ENCODE measurements at regions of chr18 and their contacts with region 1.

Region 1: GRCh38 chr18:74652392-74652988 is 54.8 kb downstream of the ZNF407 start:
- DNase-seq: no peak
- ATAC-seq: no peak

Region 2: DNA sequence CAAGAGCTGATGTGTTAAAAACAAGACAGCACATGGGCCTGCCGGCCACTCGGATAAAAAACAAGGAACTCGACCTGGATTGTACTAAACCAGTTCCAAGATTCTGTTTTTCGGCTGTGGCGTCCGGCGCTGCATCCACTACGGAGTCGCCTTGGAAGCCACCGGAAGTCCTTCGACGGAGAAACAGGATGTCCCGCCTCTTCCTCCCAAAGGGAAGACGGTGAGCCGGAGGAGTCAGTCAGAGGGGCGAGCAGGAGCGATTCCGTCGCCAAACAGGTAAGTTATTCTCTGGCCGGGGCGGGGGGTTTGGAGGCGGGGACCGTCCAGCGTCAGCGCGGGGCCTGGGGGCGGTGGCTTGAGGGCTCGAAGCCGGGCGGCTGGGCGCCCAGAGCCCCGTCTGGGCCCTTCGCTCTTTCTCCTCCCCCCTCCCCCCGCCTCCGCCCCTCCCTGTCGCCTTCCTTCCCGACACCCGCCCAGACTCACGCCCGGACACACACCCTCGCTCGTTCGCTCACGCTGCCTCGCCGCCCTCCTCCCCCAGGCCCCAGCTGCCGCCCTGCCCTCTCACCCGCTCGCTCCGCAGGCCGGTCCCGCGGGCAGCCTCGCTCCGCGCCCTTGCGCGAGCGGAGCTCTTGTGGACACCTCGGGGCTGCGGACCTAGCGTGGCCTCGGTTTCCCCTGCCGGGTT is 54.7 kb before region 1 on chr18 and contains the start of gene ZNF407:
- intact Hi-C with region 1: no loop called
- DNase-seq: peak; percentile 93
- ATAC-seq: peak; percentile 96
- total RNA-seq, gene ZNF407: 22.9 TPM

Region 3: DNA sequence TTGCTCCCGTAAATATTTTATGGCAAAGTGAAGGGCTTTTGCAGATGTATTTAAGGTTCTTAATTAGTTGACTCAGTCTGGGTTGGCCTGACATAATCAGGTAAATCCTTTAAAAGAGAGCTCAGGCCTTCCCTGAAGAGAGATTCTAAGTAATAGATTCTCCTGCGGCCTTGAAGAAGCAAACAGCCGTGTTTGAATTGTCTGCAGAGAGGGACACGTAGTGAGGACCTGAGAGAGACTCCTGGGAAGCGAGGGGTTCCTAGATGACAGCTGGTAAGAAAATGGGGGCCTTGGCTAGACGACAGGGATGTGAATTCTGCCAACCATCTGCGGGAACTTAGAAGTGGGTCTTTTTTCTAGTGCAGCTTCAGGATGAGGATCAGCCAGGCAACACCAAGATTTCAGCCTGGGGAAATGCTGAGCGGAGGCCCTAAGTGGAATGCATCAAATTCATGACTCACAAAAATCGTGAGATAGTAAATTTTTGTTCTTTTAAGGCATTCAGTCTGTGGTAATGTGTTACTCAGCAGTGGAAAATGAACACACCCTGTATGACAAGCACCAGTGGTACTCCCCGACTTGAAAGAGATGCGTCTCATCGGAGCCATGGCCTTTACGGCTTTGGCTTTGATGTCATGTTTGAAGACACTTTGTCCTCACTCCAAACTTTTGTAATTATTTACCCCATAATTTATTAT is 837.2 kb after region 1 on chr18:
- intact Hi-C with region 1: loop called (anchors 10 kb)
- DNase-seq: no peak
- ATAC-seq: peak; percentile 62

Measured in sciatic nerve (tissue), 2 donors.